Lower leg skin (tissue), 4 donors: ENCODE measurements at regions of chr14 and their contacts with region 1.

Region 1: GRCh38 chr14:73728717-73729330 is 14.6 kb upstream of the PNMA1 start:
- DNase-seq: peak; percentile 81 to 96
- H3K4me3 ChIP-seq: no peak overlapping the region
- CTCF ChIP-seq: peak in 2 of 3 donors; percentile 10 to 90
- POLR2A ChIP-seq: no peak

Region 2: DNA sequence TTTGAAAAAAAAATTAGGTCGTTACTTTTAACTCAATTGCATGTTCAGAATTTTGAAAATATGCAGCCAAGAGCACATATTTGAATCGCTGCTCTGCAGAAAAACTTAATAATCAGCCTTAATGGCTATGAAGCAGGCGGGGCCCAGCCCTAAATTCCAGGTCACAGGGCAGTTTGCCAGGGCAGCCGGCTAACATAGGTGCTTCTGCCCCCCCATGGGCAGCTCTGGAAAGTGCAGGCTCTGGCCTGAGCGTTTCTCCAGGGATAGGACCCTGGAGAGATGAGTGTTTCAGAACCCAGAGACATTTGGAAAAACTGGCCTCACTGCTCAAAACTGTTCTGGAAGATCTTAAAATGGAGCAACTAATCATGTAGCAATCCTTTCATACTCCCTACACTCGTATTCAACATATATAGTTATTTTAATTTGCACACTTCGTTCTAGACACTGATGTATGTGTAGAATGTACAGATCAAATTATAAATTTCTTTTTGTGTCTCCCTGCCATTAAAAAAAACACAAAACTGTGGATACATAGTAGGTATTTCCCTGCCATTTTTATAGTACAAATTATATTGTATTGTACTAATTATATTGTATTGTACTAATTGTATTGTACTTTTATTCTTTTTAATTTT is 96.8 kb after region 1 on chr14:
- intact Hi-C with region 1: loop called (anchors 5 kb)
- DNase-seq: peak; percentile 88 to 98
- H3K4me3 ChIP-seq: no peak overlapping the region
- CTCF ChIP-seq: peak in 1 of 3 donors; percentile 66
- POLR2A ChIP-seq: no peak

Region 3: DNA sequence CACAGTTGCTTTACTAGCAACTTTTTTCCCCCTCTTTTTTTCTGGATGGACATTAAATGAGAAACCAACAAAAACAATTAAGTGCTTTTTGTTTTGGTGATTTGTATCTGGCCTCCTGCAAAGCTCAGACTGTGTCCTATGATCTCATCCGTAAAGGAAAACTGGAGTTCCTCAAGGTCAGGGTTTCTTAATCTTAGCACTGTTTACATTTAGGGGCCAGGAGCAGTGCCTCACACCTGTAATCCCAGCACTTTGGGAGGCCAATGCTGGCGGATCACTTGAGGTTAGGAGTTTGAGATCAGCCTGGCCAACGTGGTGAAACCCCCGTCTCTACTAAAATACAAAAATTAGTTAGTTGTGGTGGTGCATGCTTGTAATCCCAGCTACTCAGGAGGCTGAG is 262.3 kb after region 1 on chr14:
- intact Hi-C with region 1: no loop called
- DNase-seq: no peak
- H3K4me3 ChIP-seq: no peak overlapping the region
- CTCF ChIP-seq: no peak
- POLR2A ChIP-seq: no peak